HEK293 (cell line): ENCODE measurements at regions of chr1 and their contacts with region 1.

Region 1: DNA sequence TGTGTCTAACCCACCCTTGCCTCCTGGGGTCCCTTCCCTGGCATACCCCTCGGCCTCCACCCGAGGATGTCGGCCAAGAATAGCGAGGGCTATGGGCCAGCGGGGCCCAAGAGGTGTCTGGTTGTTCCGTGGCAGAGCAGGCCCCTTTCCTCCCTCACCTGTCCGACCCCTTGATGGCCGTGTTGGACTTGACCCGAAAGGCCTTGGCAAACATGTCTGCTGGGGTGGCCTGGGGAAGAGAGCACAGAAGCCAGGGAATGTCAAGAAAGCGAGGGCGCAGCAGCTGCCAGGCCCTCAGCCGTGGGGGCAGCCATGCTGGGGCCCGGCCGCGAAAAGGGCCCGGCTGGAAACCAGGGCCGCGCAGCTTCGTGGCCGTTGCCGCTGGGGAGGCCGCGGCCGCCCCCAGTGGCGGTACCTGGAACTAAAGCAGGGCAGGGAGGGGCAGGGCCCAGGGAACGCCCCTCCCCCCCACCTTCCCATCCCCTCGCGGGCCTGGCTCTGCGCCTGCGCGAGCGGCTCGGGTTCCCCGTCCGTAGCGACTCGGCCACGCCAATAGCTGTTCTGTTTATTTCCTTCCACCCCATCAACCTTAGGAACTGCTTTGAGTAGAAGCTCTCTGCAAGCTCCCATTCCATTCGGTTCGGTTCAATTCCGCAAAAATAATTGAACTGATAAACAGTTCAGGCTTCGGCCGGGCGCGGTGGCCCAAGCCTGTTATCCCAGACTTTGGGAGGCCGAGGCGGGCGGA is at the start of gene EIF2D:
- H3K4me3 ChIP-seq: peak within 1 kb of the TSS; percentile 69
- H3K27ac ChIP-seq: peak within 1 kb of the TSS; percentile 93
- H3K4me1 ChIP-seq: no peaks in the 10 kb centered on the region
- CTCF ChIP-seq: peak; percentile 99

Region 2: DNA sequence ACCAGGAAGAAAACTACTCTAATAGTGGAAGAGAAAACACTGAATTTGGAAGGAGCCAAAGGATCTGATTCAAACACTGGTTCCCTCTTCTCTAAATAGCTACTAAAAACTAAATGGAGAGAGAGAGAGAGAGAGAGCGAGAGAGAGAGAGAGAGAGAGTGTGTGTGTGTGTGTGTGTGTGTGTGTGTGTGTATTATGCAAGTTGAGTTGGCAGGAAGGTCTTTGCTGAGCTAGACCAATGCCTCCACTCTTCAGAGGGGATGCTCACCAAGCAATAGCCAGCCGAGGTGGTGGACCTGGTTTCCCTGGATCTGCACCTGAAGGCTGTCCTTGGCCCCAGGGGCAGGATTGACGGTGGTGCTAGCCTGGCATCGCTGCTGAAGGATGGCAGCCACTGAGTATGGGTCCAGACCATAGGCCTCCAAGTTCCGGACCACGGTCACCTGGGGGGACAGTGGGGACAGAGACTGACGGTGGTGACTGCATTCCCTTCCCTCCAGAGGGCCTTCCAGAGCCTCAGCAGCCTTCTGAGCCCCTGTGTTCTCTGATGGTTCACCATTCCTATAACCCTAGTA is 18.9 kb before region 1 on chr1:
- CTCF ChIA-PET with region 1: no interaction called
- POLR2A ChIA-PET with region 1: no interaction called
- H3K4me3 ChIP-seq: no peak overlapping the region
- H3K27ac ChIP-seq: no peak overlapping the region
- H3K4me1 ChIP-seq: no peaks in the 10 kb centered on the region
- CTCF ChIP-seq: no peak

Region 3: DNA sequence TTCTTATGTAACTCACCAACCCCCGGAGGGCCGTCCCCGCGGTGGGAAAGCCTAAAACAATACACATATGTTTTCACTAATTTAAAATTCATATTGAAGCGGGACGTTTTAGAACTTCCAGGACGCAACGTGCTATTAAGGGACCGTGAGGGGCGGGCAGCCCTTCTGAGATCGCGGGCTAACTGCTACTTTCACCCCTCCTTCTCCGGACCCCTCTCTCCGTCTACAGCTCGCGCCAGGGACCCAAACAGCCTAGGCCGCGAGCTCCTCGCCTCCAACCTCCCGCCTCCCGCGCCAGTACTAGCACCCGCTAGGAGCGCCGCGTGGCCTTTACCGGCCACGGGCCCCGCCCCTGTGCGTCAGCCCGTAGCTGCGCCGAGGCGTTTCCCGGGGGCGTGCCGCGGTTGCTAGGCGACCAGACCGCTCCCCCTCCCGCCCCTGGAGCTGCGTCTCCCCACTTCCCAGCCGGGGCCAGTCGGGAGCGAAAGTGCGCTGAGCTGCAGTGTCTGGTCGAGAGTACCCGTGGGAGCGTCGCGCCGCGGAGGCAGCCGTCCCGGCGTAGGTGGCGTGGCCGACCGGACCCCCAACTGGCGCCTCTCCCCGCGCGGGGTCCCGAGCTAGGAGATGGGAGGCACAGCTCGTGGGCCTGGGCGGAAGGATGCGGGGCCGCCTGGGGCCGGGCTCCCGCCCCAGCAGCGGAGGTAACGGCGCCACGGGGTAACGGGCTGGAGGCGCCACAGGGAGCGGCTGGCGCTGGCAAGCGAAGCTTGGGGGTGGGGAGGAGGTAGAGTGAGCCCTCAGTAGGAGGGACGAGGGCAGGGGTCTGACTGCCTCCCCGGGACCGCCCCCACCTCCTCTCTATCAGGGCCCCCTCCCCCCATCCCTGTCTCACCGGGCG is 23.0 kb after region 1 on chr1 and contains the start of gene DYRK3:
- CTCF ChIA-PET with region 1: interaction called, 22 read pairs
- POLR2A ChIA-PET with region 1: interaction called, 19 read pairs
- H3K4me3 ChIP-seq: peak within 1 kb of the TSS; percentile 88
- H3K27ac ChIP-seq: peak within 1 kb of the TSS; percentile 56; the same call in 1 of the 2 replicates
- H3K4me1 ChIP-seq: peaks cover 11% of the 10 kb centered on the region
- CTCF ChIP-seq: peak; percentile 70

Region 4: DNA sequence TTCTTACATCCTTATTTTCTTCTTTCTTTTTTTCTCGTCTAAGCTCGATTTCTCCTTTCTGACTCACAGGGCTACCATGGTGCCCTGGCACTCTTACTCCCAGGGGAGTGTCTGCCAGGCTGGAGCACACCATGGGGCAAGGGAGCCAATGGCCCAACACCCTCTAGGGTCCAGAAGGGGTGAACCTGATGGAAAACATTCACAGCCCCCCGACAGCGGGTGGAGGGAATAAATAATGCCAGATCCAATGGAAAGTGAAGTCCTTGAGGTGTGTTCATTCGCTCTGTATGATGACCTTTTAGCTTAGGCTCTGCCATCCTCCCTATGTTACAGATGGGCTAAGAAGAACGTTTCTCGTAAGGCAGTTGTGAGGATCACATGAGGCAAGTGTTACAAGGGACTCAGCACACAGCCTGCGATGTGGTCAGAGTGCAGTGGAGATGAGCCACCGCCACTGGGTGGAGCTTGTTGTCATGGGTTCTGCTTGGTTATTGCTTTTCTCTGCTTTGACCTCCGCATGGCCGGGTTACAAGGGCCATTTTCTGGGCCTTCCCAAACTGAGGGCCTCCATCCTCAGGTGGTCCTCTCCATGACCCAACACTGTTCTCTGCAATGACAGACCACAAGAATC is 312.9 kb after region 1 on chr1:
- CTCF ChIA-PET with region 1: no interaction called
- POLR2A ChIA-PET with region 1: no interaction called
- H3K4me3 ChIP-seq: no peak overlapping the region
- H3K27ac ChIP-seq: no peak overlapping the region
- H3K4me1 ChIP-seq: no peaks in the 10 kb centered on the region
- CTCF ChIP-seq: peak; percentile 31